ENCODE measurements at regions of chr17 and their contacts with region 1.

Region 1: GRCh38 chr17:39621523-39622379 is 5.0 kb upstream of the PPP1R1B start:
- DNase-seq: peak; percentile 90
- H3K4me3 ChIP-seq: no peak overlapping the region
- H3K27ac ChIP-seq: no peak overlapping the region
- H3K4me1 ChIP-seq: peaks cover 8% of the 10 kb centered on the region
- H3K27me3 ChIP-seq: peaks cover 2% of the 10 kb centered on the region
- CTCF ChIP-seq: peak; percentile 99

Region 2: DNA sequence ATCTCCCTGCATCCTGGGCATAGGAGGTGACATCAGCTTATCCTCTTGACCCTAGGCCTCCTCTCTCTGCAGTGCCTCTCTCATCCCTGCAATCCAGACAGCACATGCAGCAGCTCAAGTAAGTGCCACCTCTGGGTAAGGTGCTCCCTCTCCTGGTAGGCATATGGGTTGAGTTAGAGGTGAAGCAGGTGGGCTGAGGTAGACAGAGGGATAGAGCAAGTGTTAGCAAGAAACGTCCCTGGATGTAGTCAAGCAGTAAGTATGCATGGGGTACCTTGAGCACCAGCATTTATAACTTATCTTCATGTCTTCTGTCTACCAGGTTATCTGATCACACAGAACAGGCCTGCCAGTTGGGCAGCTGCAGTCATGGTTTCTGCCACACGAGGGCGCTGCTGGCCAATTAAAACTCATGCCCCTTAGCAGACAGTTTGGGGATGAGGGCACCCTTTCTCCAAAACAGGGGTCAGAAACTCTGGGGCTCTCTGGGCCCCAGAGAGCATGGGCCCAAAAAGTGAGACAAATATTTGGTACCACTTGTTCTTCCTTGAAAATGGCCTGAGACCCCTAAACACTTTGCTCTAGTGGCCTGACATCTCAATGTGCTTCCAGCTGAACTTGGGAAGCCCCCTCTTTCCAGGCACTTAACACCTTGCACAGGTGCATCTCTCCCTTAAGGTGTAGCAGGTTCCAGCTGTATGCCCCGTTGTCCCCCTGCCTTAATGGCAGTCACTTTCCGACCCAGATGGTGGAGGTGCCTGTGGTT is 73.9 kb before region 1 on chr17:
- intact Hi-C with region 1: loop called (anchors 5 kb)
- DNase-seq: peak; percentile 78
- H3K4me3 ChIP-seq: no peak overlapping the region
- H3K27ac ChIP-seq: no peak overlapping the region
- H3K4me1 ChIP-seq: no peaks in the 10 kb centered on the region
- H3K27me3 ChIP-seq: no peaks in the 10 kb centered on the region
- CTCF ChIP-seq: peak; percentile 93

Region 3: DNA sequence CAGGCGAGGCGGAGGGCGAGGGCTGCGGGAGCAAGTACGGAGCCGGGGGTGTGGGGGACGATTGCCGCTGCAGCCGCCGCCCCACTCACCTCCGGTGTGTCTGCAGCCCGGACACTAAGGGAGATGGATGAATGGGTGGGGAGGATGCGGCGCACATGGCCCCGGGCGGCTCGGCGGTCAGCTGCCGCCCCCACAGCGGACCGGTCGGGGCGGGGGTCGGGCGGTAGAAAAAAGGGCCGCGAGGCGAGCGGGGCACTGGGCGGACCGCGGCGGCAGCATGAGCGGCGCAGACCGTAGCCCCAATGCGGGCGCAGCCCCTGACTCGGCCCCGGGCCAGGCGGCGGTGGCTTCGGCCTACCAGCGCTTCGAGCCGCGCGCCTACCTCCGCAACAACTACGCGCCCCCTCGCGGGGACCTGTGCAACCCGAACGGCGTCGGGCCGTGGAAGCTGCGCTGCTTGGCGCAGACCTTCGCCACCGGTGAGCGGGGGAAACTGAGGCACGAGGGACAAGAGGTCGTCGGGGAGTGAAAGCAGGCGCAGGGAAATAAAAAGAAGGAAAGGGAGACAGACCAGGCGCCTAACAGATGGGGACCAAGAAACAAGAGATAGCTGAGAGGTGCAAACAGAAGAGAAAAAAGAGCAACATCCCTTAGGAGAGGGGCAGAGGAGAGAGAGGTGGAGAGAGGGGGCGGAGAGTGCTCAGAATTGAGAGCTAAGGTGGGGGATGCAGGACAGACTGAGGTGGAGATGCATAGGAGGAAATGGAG is 46.6 kb after region 1 on chr17 and contains the start of gene PNMT:
- intact Hi-C with region 1: loop called (anchors 2 kb)
- DNase-seq: peak; percentile 78
- H3K4me3 ChIP-seq: peak within 1 kb of the TSS; percentile 29
- H3K27ac ChIP-seq: no peak within 1 kb of the TSS
- H3K4me1 ChIP-seq: peaks cover 16% of the 10 kb centered on the region
- H3K27me3 ChIP-seq: peaks cover 20% of the 10 kb centered on the region
- CTCF ChIP-seq: peak; percentile 49
- total RNA-seq, gene PNMT: 0.47 TPM in 1 of 2 donors, not detected in the other

Region 4: GRCh38 chr17:39738931-39739884 is 117.5 kb after region 1 on chr17:
- intact Hi-C with region 1: loop called (anchors 5 kb)
- DNase-seq: peak; percentile 93
- H3K4me3 ChIP-seq: peak overlapping the region; percentile 40
- H3K27ac ChIP-seq: peak overlapping the region; percentile 87
- H3K4me1 ChIP-seq: no peaks in the 10 kb centered on the region
- H3K27me3 ChIP-seq: no peaks in the 10 kb centered on the region
- CTCF ChIP-seq: no peak

Region 5: GRCh38 chr17:39754161-39754951 is 132.6 kb after region 1 on chr17:
- intact Hi-C with region 1: loop called (anchors 5 kb)
- DNase-seq: peak; percentile 94
- H3K4me3 ChIP-seq: peak overlapping the region; percentile 51
- H3K27ac ChIP-seq: peak overlapping the region; percentile 81
- H3K4me1 ChIP-seq: no peaks in the 10 kb centered on the region
- H3K27me3 ChIP-seq: no peaks in the 10 kb centered on the region
- CTCF ChIP-seq: peak; percentile 94

Region 6: DNA sequence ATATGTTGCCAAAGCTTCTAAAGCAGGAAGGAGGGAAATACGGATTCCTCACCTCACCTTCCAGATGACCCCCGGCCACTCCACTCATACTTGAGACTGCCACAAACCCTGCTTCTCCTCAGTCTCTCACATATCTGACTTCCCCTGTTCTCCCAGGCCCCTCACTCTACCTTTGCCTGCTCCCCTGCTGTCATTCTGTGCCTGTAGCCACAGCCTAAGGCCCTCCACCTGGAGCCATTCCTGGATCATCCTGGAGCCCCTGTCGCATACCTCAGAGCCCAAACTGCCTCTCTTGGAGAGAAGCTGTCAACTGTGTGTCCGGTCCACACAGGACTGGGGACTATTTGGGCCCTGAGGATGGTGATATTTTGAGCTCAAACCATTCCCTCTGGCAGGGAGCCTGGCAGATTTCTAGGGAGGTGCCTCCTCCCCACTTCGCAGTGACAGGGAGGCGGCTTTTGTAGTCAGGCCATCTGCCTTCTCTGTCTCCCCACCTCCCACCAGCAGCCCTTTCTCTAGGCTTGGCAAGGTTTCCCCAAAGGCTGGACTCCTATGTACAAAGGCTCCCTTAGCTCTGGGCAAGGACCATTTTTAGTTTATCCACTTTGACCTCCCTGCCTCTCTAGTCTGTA is 434.7 kb after region 1 on chr17:
- intact Hi-C with region 1: no loop called
- DNase-seq: no peak
- H3K4me3 ChIP-seq: no peak overlapping the region
- H3K27ac ChIP-seq: no peak overlapping the region
- H3K4me1 ChIP-seq: peaks cover 3% of the 10 kb centered on the region
- H3K27me3 ChIP-seq: no peaks in the 10 kb centered on the region
- CTCF ChIP-seq: no peak

Region 7: DNA sequence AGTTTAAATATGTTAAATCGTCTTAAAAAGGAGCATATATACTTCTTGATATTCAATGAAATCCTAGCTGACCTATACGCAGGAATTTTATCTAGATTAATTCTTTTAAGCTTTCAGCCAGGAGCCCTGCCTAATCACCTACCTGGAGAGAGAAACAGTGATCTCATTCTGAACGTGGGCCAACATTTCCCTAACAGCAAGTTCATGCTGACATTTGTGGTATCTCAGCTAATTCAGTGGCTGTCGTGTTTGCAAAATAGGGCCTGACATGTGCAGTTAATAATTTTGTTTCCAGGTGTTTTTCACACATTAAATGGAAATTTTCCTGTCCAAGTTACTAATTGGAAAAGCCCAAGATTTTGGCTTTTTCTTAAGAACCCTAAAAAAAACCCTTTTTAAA is 1064.4 kb after region 1 on chr17:
- intact Hi-C with region 1: no loop called
- DNase-seq: no peak
- H3K4me3 ChIP-seq: no peak overlapping the region
- H3K27ac ChIP-seq: no peak overlapping the region
- H3K4me1 ChIP-seq: no peaks in the 10 kb centered on the region
- H3K27me3 ChIP-seq: no peaks in the 10 kb centered on the region
- CTCF ChIP-seq: no peak

Measured in colonic mucosa (tissue), 4 donors.